ENCODE measurements at regions of chr16 and their contacts with region 1.

Region 1: GRCh38 chr16:30407102-30407803 is at the start of gene ZNF771:
- DNase-seq: peak; percentile 95
- ATAC-seq: peak; percentile 89
- H3K4me3 Mint-ChIP-seq: peak within 1 kb of the TSS; percentile 93
- H3K27ac Mint-ChIP-seq: peak within 1 kb of the TSS; percentile 98
- H3K4me1 Mint-ChIP-seq: peaks cover 28% of the 10 kb centered on the region
- H3K27me3 Mint-ChIP-seq: no peaks in the 10 kb centered on the region
- CTCF ChIP-seq: no peak
- total RNA-seq, gene ZNF771: 5.4 to 6.6 TPM

Region 2: GRCh38 chr16:30186782-30187555 is 220.3 kb before region 1 on chr16:
- CTCF ChIA-PET with region 1: interaction called, 12 read pairs
- POLR2A ChIA-PET with region 1: interaction called, 3 read pairs
- intact Hi-C with region 1: no loop called
- DNase-seq: peak; percentile 95
- ATAC-seq: peak; percentile 10
- H3K4me3 Mint-ChIP-seq: peak overlapping the region; percentile 100
- H3K27ac Mint-ChIP-seq: peak overlapping the region; percentile 100
- H3K4me1 Mint-ChIP-seq: peaks cover 20% of the 10 kb centered on the region
- H3K27me3 Mint-ChIP-seq: no peaks in the 10 kb centered on the region
- CTCF ChIP-seq: peak; percentile 97

Region 3: DNA sequence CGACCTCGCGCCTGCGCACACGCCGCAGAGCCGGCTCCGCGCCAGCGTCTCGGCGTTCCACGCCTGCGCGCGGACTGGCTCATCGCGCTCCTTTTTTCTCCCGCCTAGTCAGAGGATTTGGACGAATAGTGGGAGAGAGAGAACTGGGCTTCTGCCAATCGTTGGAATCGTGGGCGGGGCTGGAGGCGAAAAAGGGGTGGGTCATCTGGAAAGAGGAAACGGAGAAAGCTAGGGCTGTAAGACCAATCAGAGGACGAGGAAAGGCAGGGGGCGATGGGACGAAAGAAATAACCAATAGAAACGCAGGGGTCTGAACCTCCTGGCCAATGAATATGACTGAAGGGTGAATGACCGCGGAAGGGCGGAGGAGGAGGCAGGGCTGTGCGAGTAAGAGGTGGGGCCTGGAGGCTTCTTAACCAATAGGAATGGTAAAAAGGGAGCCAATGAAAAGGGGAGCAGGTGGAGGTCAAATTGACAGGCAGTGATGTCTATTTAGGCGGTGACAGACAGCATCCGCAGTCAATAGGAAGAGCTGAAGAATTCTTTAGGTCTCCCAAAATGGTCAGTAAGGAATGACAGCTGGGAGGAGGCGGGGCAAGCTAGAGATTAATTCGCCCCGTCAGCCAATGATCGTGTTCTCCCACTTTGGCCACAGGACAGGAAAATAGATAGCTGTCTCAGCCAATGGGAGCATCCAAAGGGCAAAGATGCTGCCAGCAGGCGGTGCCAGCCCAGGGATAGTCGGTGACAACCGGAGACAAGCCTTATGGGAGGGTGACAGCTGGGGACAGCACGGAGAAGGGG is 36.6 kb before region 1 on chr16 and contains the start of gene TBC1D10B:
- CTCF ChIA-PET with region 1: interaction called, 19 read pairs
- POLR2A ChIA-PET with region 1: interaction called, 3 read pairs
- intact Hi-C with region 1: loop called (anchors 5 kb)
- DNase-seq: peak; percentile 99
- ATAC-seq: peak; percentile 87
- H3K4me3 Mint-ChIP-seq: peak within 1 kb of the TSS; percentile 95
- H3K27ac Mint-ChIP-seq: peak within 1 kb of the TSS; percentile 92
- H3K4me1 Mint-ChIP-seq: peaks cover 35% of the 10 kb centered on the region
- H3K27me3 Mint-ChIP-seq: no peaks in the 10 kb centered on the region
- CTCF ChIP-seq: no peak
- total RNA-seq, gene TBC1D10B: 39.7 to 41.3 TPM

Region 4: DNA sequence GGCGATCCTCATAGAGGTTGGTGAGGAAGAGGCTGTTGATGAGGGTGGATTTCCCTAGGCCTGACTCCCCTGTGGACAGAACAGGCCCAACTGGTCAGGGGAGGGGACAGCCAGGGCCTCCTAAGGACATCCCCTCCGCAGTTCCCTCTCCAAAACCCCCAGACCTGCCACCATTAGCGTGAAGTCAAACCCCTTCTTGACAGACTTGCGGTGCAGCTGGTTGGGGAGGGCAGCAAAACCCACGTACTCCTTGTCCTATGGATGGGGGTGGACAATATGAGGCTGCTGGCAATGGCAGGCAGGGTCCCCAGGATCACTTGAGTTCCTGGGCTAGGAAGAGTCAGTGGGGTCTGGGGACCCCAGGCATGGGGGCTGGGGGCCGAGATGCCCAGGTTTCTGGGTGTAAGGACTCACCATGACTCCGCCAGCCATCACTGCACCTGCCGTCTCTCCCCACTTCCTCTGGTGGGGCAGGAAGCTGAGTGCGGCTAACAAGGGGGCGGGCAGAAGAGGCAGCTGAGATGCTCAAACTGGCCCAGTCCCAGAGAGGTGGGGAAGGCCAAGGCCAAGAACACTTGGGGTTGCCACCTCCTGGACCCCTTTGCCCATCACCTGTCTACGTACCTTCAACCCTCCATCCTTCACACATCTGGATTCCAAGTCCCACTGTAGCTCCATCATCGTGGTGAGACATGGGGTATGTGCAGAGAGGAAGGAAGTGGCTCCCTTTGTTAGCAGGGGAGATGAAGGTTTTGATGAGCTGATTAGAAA is 25.0 kb before region 1 on chr16 and contains the start of gene SEPTIN1:
- CTCF ChIA-PET with region 1: interaction called, 43 read pairs
- POLR2A ChIA-PET with region 1: interaction called, 12 read pairs
- intact Hi-C with region 1: no loop called
- DNase-seq: peak; percentile 89
- ATAC-seq: peak; percentile 40
- H3K4me3 Mint-ChIP-seq: peak within 1 kb of the TSS; percentile 84
- H3K27ac Mint-ChIP-seq: peak within 1 kb of the TSS; percentile 98
- H3K4me1 Mint-ChIP-seq: peaks cover 37% of the 10 kb centered on the region
- H3K27me3 Mint-ChIP-seq: no peaks in the 10 kb centered on the region
- CTCF ChIP-seq: no peak
- total RNA-seq, gene SEPTIN1: 163 to 169 TPM

Region 5: GRCh38 chr16:30395155-30395991 is 11.9 kb before region 1 on chr16 and contains the start of gene ZNF48:
- CTCF ChIA-PET with region 1: interaction called, 51 read pairs
- POLR2A ChIA-PET with region 1: interaction called, 18 read pairs
- intact Hi-C with region 1: no loop called
- DNase-seq: peak; percentile 49
- ATAC-seq: peak; percentile 61
- H3K4me3 Mint-ChIP-seq: peak within 1 kb of the TSS; percentile 83
- H3K27ac Mint-ChIP-seq: peak within 1 kb of the TSS; percentile 83
- H3K4me1 Mint-ChIP-seq: peaks cover 37% of the 10 kb centered on the region
- H3K27me3 Mint-ChIP-seq: no peaks in the 10 kb centered on the region
- CTCF ChIP-seq: peak; percentile 32
- total RNA-seq, gene ZNF48: 10.4 to 10.9 TPM

Region 6: DNA sequence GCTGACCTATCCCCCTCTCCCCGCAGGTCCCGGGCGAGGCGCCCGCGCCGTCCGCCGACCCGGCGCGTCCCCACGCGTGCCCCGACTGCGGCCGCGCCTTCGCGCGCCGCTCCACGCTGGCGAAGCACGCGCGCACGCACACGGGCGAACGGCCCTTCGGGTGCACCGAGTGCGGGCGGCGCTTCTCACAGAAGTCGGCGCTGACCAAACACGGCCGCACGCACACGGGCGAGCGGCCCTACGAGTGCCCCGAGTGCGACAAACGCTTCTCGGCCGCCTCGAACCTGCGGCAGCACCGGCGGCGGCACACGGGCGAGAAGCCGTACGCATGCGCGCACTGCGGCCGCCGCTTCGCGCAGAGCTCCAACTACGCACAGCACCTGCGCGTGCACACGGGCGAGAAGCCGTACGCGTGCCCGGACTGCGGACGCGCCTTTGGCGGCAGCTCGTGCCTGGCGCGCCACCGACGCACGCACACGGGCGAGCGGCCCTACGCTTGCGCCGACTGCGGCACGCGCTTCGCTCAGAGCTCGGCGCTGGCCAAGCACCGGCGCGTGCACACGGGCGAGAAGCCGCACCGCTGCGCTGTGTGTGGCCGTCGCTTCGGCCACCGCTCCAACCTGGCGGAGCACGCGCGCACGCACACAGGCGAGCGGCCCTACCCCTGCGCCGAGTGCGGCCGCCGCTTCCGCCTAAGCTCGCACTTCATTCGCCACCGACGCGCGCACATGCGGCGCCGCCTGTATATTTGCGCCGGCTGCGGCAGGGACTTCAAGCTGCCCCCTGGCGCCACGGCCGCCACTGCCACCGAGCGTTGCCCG is 10.5 kb after region 1 on chr16:
- CTCF ChIA-PET with region 1: interaction called, 36 read pairs
- POLR2A ChIA-PET with region 1: interaction called, 38 read pairs
- intact Hi-C with region 1: no loop called
- DNase-seq: peak; percentile 89
- ATAC-seq: peak; percentile 90
- H3K4me3 Mint-ChIP-seq: peak overlapping the region; percentile 58
- H3K27ac Mint-ChIP-seq: no peak overlapping the region
- H3K4me1 Mint-ChIP-seq: peaks cover 30% of the 10 kb centered on the region
- H3K27me3 Mint-ChIP-seq: no peaks in the 10 kb centered on the region
- CTCF ChIP-seq: no peak

Region 7: DNA sequence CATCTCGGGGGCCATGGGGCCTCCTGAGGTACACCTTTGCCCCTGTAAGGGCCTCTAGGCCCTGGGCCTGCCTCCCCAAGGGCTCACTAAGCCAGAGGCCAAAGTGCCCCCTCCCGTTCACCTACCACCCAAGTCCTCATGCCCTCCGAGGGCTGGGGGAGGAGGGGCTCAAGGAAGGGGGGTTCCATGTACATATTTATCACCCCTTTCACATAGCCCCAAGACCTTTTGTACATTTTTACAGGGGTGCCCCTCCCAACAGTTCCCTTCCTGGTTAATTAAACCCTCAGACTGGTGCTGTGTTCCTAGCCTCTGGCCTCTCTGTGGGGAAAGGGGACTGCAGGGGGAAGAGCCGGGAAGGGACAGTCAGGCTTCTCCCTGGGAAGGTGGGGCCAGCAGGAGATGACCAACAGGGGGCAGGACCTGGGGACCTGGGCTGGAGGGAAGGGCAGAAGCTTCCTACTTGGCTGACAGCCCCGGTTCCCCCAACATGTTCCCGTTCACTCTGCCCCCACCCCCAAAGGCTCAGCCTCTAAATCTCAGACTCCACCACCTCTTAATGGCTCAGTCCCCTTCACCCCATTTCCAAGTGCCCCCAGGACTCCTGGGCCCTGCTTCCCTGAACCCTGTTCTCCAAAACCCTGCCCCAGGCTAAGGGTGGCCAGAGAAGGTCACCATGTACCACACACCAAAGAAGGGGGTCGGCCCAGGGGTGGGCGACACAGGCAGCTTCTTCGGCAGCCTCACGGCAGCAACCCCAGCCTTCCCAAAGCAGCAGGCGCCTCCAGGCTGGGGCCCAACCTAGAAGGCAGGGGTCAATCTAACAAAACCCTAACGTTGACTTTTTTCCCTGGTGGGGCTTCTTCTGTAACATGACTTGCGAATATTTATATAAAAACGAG is 262.9 kb after region 1 on chr16:
- CTCF ChIA-PET with region 1: no interaction called
- POLR2A ChIA-PET with region 1: no interaction called
- intact Hi-C with region 1: no loop called
- DNase-seq: no peak
- ATAC-seq: no peak
- H3K4me3 Mint-ChIP-seq: no peak overlapping the region
- H3K27ac Mint-ChIP-seq: no peak overlapping the region
- H3K4me1 Mint-ChIP-seq: peaks cover 5% of the 10 kb centered on the region
- H3K27me3 Mint-ChIP-seq: no peaks in the 10 kb centered on the region
- CTCF ChIP-seq: no peak

Measured in activated CD8-positive, alpha-beta T cell treated with anti-CD3 and anti-CD28 coated beads for 36 hours (primary cell).